Aorta (tissue), 5 donors: ENCODE measurements at regions of chr2 and their contacts with region 1.

Region 1: GRCh38 chr2:201071479-201072200 is at the starts of genes HYCC2 and NDUFB3:
- DNase-seq: peak; percentile 92 to 94
- ATAC-seq: peak; percentile 99
- H3K4me3 ChIP-seq: peak within 1 kb of the TSS; percentile 69 to 79
- H3K27ac ChIP-seq: peak within 1 kb of the TSS in 1 of 2 donors; percentile 28
- H3K4me1 ChIP-seq: peaks cover 0 to 2% of the 10 kb centered on the region in 2 donors
- H3K27me3 ChIP-seq: no peaks in the 10 kb centered on the region
- total RNA-seq, gene HYCC2: 26.2 to 31.4 TPM
- total RNA-seq, gene NDUFB3: 42.7 to 43.2 TPM

Region 2: DNA sequence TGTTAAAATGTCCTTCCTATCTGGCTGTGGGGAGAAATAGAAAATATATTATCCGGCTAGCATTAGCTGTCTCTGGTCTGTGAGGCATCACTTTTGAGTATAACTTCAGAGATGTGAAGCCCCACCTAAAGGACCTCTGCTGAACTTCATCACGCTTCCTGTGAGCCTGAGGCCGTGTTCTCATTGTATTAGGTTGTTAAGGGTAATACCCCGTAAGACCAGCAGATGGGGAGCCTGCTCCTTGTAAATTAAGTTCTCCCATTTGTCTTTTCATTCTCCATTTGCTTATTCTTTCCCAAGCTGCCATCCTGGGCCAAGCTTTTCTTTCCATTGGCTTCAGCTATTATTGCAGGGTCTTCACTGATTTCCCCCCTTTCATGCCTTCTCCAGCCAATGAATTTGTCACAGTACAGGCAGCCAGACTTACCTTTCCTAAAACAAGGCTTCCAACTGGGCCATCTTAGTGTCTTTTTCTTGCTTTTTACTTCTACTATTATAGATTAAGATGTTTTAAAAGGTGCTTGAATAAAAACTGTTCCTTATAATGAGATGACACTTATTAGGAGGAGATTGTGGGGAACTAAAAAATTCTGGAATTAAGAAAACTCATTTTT is 170.1 kb before region 1 on chr2:
- intact Hi-C with region 1: loop called (anchors 5 kb)
- DNase-seq: peak in 1 of 2 donors; percentile 67
- ATAC-seq: peak; percentile 80
- H3K4me3 ChIP-seq: no peak overlapping the region
- H3K27ac ChIP-seq: no peak overlapping the region
- H3K4me1 ChIP-seq: no peaks in the 10 kb centered on the region
- H3K27me3 ChIP-seq: no peaks in the 10 kb centered on the region

Region 3: GRCh38 chr2:201118121-201118960 is 46.7 kb after region 1 on chr2:
- intact Hi-C with region 1: loop called in 1 of 2 experiments (anchors 5 kb)
- DNase-seq: peak; percentile 93 to 94
- ATAC-seq: peak; percentile 78
- H3K4me3 ChIP-seq: peak overlapping the region; percentile 57 to 61
- H3K27ac ChIP-seq: peak overlapping the region in 1 of 2 donors; percentile 53
- H3K4me1 ChIP-seq: peaks cover 0 to 2% of the 10 kb centered on the region in 2 donors
- H3K27me3 ChIP-seq: no peaks in the 10 kb centered on the region

Region 4: DNA sequence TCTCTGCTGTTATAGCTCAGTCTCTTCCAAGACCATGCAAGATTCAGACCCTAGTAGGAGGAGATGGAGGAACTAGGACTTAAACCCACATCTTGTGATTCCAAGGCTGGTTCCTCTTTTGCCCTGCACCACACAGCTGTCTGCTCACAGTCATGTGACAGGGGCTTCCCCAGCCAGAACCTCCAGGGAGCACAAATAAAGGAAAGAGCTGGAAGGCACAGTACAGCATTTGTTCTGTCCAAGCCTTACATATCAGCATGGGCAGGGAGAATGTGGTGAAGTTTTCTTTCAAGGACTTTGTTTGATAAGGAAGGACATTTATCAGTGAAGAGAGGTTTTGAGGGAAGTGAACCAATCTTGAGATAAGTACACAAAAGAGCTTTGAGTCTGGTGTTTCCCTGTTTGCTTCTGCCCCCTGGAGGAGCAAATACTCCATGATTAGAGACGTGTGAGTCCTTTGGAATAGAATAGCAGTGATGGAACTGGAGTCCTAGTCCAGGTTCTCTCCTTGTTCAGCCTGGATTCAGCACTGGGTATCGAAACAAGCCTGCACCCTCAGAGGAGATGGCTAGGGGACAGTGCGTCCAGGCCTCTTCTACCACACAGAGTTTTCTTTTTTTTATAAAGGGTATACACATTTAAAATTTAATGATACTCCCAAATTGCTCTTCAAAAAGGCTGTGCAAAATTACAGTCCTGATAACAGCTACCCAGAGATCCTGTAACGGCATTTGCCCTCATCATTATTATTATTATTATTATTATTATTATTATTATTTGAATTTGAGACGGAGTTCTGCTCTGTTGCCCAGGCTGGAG is 86.7 kb after region 1 on chr2:
- intact Hi-C with region 1: loop called in 1 of 2 experiments (anchors 10 kb)
- DNase-seq: peak in 1 of 2 donors; percentile 85
- ATAC-seq: peak; percentile 84
- H3K4me3 ChIP-seq: no peak overlapping the region
- H3K27ac ChIP-seq: peak overlapping the region in 1 of 2 donors; percentile 23
- H3K4me1 ChIP-seq: no peaks in the 10 kb centered on the region
- H3K27me3 ChIP-seq: no peaks in the 10 kb centered on the region

Region 5: DNA sequence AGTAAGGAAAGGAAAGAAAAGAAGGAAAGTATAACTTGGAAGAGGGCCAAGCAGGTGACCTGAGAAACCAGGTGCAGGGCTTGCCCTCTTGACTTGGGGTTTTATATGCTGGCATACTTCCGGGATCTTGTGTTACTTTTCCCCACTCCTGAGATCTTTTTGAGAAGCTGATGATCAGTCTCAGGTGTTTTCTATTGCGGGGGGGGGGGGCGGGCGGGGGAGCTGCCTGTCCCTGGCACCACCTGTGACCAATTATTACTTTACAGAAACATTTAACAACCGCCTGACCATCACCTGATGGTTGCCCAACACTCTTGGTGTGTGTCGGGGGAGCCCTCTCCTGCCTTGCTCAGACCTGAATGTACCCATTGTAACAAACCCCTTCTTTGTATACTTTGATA is 104.4 kb after region 1 on chr2:
- intact Hi-C with region 1: loop called in 1 of 2 experiments (anchors 5 kb)
- DNase-seq: no peak
- ATAC-seq: no peak
- H3K4me3 ChIP-seq: no peak overlapping the region
- H3K27ac ChIP-seq: no peak overlapping the region
- H3K4me1 ChIP-seq: no peaks in the 10 kb centered on the region
- H3K27me3 ChIP-seq: no peaks in the 10 kb centered on the region

Region 6: DNA sequence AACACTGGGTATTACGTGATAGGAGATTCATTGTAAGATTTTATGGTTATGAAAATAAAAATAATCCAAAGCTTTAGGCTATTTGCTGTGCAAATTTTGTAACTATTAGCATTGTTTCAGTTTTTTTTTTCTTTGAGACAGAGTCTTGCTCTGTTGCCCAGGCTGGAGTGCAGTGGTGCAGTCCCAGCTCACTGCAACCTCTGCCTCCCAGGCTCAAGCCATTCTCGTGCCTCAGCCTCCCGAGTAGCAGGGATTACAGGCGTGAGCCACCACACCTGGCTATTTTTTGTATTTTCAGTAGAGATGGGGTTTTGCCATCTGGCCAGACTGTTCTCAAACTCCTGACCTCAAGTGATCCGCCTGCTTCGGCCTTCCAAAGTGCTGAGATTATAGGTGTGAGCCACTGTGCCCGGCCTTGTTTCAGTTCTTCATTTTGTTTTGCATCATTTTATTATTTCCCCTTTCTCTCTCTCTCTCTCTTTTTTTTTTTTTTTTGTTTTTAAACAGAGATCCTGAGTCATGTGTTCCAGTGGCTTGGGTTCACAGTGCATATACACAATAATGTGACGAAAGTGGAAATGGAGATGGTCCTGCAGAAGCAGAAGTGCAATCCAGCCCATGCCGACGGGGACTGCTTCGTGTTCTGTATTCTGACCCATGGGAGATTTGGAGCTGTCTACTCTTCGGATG is 137.1 kb after region 1 on chr2:
- intact Hi-C with region 1: no loop called
- DNase-seq: peak in 1 of 2 donors; percentile 69
- ATAC-seq: peak; percentile 59
- H3K4me3 ChIP-seq: no peak overlapping the region
- H3K27ac ChIP-seq: no peak overlapping the region
- H3K4me1 ChIP-seq: no peaks in the 10 kb centered on the region
- H3K27me3 ChIP-seq: no peaks in the 10 kb centered on the region